Activated T-helper 2 cell treated with anti-CD3 and anti-CD28 coated beads, Interferon-gamma antibody, Interleukin-2, Interleukin-4, amounts not matched to agents 10 μg/mL and 5 μg/mL and 100 μg/mL, durations not matched to agents 14 hours and 24 hours and 36 hours (primary cell): ENCODE measurements at regions of chr6 and their contacts with region 1.

Region 1: DNA sequence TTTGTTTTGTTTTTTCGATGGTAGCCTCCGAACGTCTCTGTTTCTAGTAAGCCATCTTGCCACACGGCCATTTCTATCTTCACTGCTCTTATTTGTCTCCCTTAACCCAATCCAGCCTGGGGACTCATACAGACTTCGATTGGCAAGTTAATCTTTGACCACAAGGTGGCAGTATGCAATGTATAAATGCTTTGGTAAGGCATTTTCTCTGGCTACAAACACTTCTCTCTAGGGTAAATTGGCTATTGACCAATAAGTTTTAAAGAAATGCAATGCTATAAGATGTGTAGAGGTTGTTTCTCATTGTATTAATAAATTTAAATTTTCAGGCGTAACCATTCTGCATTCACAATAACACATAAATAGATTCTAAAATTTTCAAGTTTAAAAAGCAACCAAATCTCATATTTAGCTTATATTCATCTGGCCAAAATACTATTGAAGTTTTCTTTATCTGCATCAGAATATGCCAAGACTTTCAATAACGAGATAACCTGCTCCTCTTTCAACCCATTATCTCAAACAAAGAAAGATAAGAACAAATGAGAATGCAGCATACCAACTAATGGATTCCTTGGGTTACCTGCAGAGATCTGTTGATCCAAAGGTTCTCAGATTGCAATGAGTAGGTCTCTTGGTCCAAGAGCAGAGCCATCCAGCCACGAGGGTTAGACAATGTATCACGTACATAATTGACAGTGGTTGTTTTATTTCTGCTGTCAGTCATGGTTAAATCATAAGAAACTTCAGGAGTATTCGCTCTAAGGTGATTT is 231.9 kb downstream of the PKHD1 start:
- DNase-seq: no peak
- H3K4me3 Mint-ChIP-seq: no peak overlapping the region
- H3K27ac Mint-ChIP-seq: no peak overlapping the region
- H3K4me1 Mint-ChIP-seq: no peaks in the 10 kb centered on the region
- H3K27me3 Mint-ChIP-seq: no peaks in the 10 kb centered on the region

Region 2: GRCh38 chr6:51959744-51960383 is 104.4 kb after region 1 on chr6:
- intact Hi-C with region 1: loop called (anchors 1 kb)
- DNase-seq: peak; percentile 9
- H3K4me3 Mint-ChIP-seq: no peak overlapping the region
- H3K27ac Mint-ChIP-seq: no peak overlapping the region
- H3K4me1 Mint-ChIP-seq: no peaks in the 10 kb centered on the region
- H3K27me3 Mint-ChIP-seq: peaks cover 6% of the 10 kb centered on the region

Region 3: DNA sequence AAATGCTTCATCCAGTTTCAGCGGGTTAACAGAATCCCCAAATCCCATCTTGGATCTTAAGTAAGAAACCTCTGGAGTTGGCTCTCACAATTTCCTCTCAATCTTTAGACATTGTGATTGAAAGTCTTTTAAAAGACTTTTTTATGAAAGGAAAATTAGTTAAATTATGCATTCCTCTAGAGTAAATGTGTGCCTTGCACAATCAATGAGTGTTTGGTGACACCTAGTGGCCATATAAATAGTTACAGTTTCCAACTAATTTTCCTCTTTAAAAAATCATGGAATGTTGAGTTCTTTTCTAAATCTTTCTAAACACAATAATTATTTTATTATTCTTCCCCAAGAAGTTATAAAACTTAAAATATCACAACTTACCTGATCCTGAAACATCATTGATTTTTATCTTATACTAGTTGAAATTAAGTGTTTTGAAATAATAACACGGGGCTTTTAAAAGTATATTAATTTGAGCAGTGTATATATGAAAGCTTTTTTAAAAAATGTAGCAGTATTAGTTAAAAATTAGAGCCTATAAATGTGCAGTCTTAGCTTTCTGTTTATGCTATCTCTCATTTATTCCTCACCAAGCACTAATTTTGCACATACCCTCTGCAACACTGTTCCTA is 165.6 kb after region 1 on chr6:
- intact Hi-C with region 1: loop called (anchors 1 kb)
- DNase-seq: no peak
- H3K4me3 Mint-ChIP-seq: no peak overlapping the region
- H3K27ac Mint-ChIP-seq: no peak overlapping the region
- H3K4me1 Mint-ChIP-seq: no peaks in the 10 kb centered on the region
- H3K27me3 Mint-ChIP-seq: peaks cover 2% of the 10 kb centered on the region